ENCODE measurements at regions of chr10 and their contacts with region 1.

Region 1: DNA sequence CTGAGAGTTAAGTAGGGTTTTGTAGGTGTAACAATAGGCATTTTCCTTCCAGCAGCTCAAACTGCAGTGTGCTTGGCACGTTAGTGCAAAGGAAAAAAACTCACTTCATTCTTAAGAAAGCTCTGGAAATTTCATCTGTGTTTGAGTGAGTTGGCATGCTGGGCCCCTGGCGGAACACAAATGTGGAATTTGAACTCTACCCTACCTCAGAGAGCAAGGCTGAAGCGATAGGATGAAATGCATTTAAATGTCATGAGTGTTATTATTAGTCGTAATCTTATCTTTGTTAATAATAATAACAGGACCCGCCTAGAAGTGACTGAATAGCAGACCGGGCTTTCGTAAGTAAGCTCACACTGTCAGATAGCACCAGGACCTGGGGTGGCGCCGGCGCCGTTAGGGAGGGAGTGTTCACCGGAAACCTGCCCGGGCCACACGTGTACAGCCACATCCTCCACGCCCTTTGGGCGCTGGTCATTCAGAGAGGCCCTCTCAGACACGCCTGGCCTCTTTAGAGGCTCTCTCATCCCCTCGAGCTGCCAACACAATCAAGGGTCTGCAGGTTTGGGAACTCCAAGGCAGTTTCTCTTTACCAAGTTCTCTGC is 63.5 kb downstream of the GRK5 start:
- DNase-seq: peak; percentile 41
- ATAC-seq: peak; percentile 81
- H3K4me3 ChIP-seq: peak overlapping the region; percentile 28 to 48
- H3K27ac ChIP-seq: peak overlapping the region; percentile 81
- H3K4me1 ChIP-seq: peaks cover 47 to 72% of the 10 kb centered on the region in 2 experiments
- H3K27me3 ChIP-seq: no peaks in the 10 kb centered on the region
- CTCF ChIP-seq: no peak
- POLR2A ChIP-seq: peak; percentile 58
- RAD21 ChIP-seq: no peak

Region 2: GRCh38 chr10:119165171-119166110 is 105.4 kb before region 1 on chr10 and contains the start of gene SFXN4:
- CTCF ChIA-PET with region 1: no interaction called
- POLR2A ChIA-PET with region 1: no interaction called
- RAD21 ChIA-PET with region 1: no interaction called
- intact Hi-C with region 1: no loop called
- DNase-seq: peak; percentile 44
- ATAC-seq: peak; percentile 93
- H3K4me3 ChIP-seq: peak within 1 kb of the TSS; percentile 84 to 88
- H3K27ac ChIP-seq: peak within 1 kb of the TSS; percentile 81
- H3K4me1 ChIP-seq: peaks cover 10 to 24% of the 10 kb centered on the region in 2 experiments
- H3K27me3 ChIP-seq: no peaks in the 10 kb centered on the region
- CTCF ChIP-seq: no peak
- POLR2A ChIP-seq: peak; percentile 55
- RAD21 ChIP-seq: no peak
- total RNA-seq, gene SFXN4: 58.2 TPM

Region 3: DNA sequence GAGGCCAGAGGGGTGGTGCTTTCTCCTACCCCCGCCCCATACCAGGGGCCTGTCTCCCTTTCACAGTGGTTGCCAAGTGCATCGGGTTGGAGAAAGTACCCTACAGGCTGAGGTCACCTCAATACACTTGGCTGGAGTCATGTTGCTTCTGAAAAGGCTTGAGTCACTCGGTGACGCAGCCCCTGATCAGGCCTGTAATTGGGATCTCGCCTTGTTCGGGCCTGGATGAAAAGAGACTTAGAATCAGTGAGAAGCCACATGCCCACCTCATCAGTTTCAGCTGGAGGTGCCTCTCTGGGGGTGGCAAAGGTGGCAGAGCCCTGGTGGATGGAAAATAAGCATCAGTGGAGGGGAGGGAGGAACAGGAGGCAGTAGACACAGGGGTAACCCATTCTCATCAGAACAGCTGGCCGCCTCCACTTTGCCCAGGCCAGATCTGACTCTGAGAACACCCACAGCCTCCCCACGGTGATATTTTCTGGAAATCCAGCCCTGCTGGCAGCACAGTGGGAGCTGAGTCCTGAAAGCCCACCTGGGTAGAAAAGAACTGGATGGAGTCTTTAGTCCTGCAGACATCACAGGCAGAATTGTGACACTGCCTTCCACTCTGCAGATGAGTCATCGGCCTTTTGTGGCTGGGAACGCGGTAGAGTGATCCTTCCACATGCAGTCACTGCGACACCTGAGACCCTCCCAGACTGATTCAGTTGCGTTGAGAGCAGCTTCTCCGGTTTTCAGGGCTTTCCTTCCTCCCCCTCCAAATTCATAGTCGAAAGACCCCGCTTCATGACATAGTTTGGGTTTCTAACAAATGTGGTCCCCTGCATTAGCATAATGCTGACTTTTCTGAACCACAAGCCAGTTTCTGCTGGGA is 44.5 kb after region 1 on chr10:
- CTCF ChIA-PET with region 1: no interaction called
- POLR2A ChIA-PET with region 1: interaction called, 10 read pairs
- RAD21 ChIA-PET with region 1: no interaction called
- intact Hi-C with region 1: loop called (anchors 2 kb)
- DNase-seq: peak; percentile 91
- ATAC-seq: peak; percentile 72
- H3K4me3 ChIP-seq: peak overlapping the region; percentile 13 to 38
- H3K27ac ChIP-seq: peak overlapping the region; percentile 98
- H3K4me1 ChIP-seq: peaks cover 60 to 74% of the 10 kb centered on the region in 2 experiments
- H3K27me3 ChIP-seq: no peaks in the 10 kb centered on the region
- CTCF ChIP-seq: no peak
- POLR2A ChIP-seq: no peak
- RAD21 ChIP-seq: no peak

Region 4: GRCh38 chr10:119428789-119429188 is 157.9 kb after region 1 on chr10:
- CTCF ChIA-PET with region 1: no interaction called
- POLR2A ChIA-PET with region 1: no interaction called
- RAD21 ChIA-PET with region 1: no interaction called
- intact Hi-C with region 1: no loop called
- DNase-seq: no peak
- ATAC-seq: peak; percentile 73
- H3K4me3 ChIP-seq: no peak overlapping the region
- H3K27ac ChIP-seq: no peak overlapping the region
- H3K4me1 ChIP-seq: peaks cover 11 to 12% of the 10 kb centered on the region in 2 experiments; a peak in 3 of 4 replicates
- H3K27me3 ChIP-seq: no peaks in the 10 kb centered on the region
- CTCF ChIP-seq: no peak
- POLR2A ChIP-seq: no peak
- RAD21 ChIP-seq: no peak

Region 5: GRCh38 chr10:119803264-119803663 is 532.4 kb after region 1 on chr10:
- CTCF ChIA-PET with region 1: no interaction called
- POLR2A ChIA-PET with region 1: no interaction called
- RAD21 ChIA-PET with region 1: no interaction called
- intact Hi-C with region 1: no loop called
- DNase-seq: no peak
- ATAC-seq: no peak
- H3K4me3 ChIP-seq: no peak overlapping the region
- H3K27ac ChIP-seq: no peak overlapping the region
- H3K4me1 ChIP-seq: no peaks in the 10 kb centered on the region
- H3K27me3 ChIP-seq: no peaks in the 10 kb centered on the region
- CTCF ChIP-seq: no peak
- POLR2A ChIP-seq: no peak
- RAD21 ChIP-seq: no peak